CD8-positive, alpha-beta T cell (primary cell): ENCODE measurements at regions of chr1 and their contacts with region 1.

Region 1: DNA sequence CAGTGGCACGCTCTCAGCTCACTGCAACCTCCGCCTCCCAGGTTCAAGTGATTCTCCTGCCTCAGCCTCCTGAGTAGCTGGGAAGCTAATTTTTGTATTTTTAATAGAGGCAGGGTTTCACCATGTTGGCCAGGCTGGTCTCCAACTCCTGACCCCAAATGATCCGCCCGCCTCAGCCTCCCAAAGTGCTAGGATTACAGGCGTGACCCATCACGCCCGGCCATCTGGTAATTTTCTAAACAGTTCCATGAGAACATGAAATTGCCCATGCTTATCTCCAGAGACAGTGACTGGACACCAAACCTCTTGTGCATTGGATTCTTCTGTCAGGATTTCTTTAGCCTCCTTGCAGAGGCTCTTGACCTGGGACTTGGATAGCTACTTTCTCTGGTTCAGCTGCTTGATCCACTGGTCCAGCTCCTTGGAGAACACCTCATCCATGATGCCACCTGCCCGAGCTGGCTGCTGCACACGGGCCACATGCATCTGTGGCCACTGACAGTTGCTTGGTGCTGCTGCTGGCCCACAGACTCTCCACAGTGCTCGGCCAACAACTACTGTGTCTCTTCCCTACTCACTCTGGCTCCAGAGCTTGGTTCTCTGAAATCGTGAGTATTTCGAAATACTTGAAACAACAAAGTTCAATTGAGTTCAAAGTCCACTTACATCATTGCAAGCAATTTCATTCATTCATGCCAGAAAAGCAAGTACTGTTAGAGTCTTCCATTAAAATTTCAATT is 40.0 kb upstream of the CTPS1 start:
- DNase-seq: no peak
- ATAC-seq: no peak
- H3K4me3 ChIP-seq: no peak overlapping the region
- H3K4me3 Mint-ChIP-seq: no peak overlapping the region
- H3K27ac ChIP-seq: no peak overlapping the region
- H3K27ac Mint-ChIP-seq: no peak overlapping the region
- H3K4me1 ChIP-seq: no peaks in the 10 kb centered on the region
- H3K4me1 Mint-ChIP-seq: no peaks in the 10 kb centered on the region
- H3K27me3 ChIP-seq: peaks cover 0 to 2% of the 10 kb centered on the region in 2 experiments
- H3K27me3 Mint-ChIP-seq: peaks cover 5% of the 10 kb centered on the region
- CTCF ChIP-seq: no peak

Region 2: DNA sequence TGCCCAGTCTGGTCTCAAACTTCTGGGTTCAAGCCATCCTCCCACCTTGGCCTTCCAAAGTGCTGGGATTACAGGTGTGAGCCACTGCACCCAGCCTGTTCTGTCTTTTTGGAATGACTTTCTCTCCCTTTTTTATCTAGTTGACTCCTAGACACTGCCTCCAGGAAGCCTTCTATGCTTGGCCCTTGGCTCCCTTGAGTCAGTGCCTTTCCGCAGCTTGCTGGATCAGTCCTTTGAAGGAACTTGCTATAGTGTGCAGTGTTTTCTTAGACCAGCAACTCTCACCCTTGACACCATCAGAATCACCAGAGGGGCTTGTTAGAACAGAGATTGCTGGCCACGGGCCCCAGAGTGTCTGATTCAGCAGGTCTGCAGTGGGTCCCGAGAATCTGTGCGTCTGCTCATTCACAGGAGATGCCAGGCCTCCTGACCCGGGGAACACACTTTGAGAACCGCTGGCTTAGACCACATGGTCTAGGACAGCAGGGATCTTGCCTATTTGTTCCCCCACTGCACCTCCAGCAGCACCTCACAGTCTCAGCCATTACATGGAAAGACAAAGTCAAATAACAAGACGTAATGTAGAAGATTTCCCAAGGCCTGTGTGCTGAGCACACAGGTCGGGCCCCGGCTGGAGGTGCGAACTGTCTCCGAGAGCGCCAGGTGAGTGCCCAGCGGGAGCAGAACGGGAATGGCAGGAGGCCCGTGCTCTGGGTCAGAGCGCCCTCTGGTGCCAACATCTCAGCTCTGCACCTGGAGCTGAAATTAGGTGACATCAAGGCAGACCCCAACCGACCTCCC is 12.7 kb after region 1 on chr1:
- CTCF ChIA-PET with region 1: interaction called, 14 read pairs
- POLR2A ChIA-PET with region 1: no interaction called
- intact Hi-C with region 1: no loop called
- DNase-seq: peak; percentile 25 to 71 (median 61)
- ATAC-seq: peak; percentile 64
- H3K4me3 ChIP-seq: no peak overlapping the region
- H3K4me3 Mint-ChIP-seq: no peak overlapping the region
- H3K27ac ChIP-seq: no peak overlapping the region
- H3K27ac Mint-ChIP-seq: no peak overlapping the region
- H3K4me1 ChIP-seq: no peaks in the 10 kb centered on the region
- H3K4me1 Mint-ChIP-seq: peaks cover 5% of the 10 kb centered on the region
- H3K27me3 ChIP-seq: no peaks in the 10 kb centered on the region
- H3K27me3 Mint-ChIP-seq: peaks cover 30% of the 10 kb centered on the region
- CTCF ChIP-seq: peak; percentile 88